Prostate gland (tissue), 2 donors: ENCODE measurements at regions of chr7 and their contacts with region 1.

Region 1: GRCh38 chr7:108146070-108146837 is 16.1 kb upstream of the LAMB4 start:
- DNase-seq: peak; percentile 53
- H3K4me3 ChIP-seq: no peak overlapping the region
- H3K27ac ChIP-seq: no peak overlapping the region
- H3K4me1 ChIP-seq: no peaks in the 10 kb centered on the region
- H3K27me3 ChIP-seq: no peaks in the 10 kb centered on the region
- CTCF ChIP-seq: peak; percentile 50 to 87 (median 76)
- POLR2A ChIP-seq: no peak

Region 2: GRCh38 chr7:107469929-107470328 is 676.3 kb before region 1 on chr7 and contains the start of gene GPR22:
- intact Hi-C with region 1: loop called (anchors 5 kb)
- DNase-seq: no peak
- H3K4me3 ChIP-seq: no peak within 1 kb of the TSS
- H3K27ac ChIP-seq: no peak within 1 kb of the TSS
- H3K4me1 ChIP-seq: no peaks in the 10 kb centered on the region
- H3K27me3 ChIP-seq: no peaks in the 10 kb centered on the region
- CTCF ChIP-seq: no peak
- POLR2A ChIP-seq: no peak
- total RNA-seq, gene GPR22: not detected

Region 3: DNA sequence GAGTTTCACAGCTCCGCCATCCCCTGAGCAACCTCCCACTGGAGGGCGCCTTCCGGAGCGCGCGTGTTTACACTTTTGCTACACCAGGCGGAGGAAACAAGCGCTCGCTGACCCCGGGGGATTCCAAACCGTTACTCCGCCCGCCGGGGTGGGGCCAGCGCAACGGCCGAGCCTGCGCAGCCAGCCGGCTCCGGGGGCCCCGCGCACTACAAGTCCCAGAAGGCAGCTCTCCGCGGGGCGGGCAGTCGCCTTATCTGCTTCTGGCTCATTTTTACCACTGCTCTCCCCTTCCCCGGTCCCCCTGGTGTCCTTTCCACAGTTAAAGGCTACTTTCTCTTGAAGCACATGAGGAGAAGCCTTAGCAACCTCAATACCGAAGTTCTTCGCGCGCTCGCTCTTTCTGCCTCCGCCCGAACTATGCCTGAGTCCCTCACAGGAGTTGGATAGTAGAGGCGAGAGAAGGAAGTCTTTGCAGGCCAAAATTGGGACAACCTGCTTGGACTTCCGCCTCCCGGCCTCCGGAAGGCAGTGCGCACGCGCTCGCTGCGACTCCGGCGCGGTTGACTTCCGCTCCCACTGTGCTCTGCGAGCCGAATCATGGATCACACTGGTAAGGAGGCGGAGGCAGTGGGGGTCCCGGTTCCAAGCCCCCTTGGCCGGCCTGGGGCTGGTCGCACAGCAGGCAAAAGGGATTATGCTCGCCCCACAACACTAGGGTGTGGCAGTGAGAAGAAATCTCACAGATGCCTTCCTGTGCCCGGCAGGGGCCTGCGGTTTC is 402.5 kb before region 1 on chr7 and contains the start of gene CBLL1:
- intact Hi-C with region 1: loop called (anchors 10 kb)
- DNase-seq: peak; percentile 96
- H3K4me3 ChIP-seq: peak within 1 kb of the TSS; percentile 71 to 73
- H3K27ac ChIP-seq: peak within 1 kb of the TSS; percentile 89 to 95
- H3K4me1 ChIP-seq: no peaks in the 10 kb centered on the region
- H3K27me3 ChIP-seq: no peaks in the 10 kb centered on the region
- CTCF ChIP-seq: peak; percentile 38 to 87 (median 76)
- POLR2A ChIP-seq: peak; percentile 24
- total RNA-seq, gene CBLL1: 35.3 to 49.2 TPM

Region 4: DNA sequence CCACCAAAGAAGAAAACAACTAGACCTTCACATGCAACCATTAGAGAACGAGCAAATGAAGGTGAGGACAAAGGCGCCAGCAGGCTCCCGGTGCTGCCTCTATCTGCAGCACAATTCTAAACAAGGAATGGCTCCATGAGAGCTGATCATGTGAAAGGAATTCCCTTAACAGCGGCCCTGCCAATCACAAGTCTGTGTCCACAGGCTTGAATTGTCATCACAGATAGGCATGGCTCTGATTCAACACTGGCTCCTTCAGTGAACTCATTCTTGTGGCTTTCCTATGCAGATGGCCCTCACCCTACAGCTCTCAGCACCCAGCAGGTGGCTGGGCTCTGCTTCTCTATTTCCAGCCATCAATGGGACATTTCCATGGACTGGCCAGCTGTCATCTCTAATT is 179.5 kb before region 1 on chr7:
- intact Hi-C with region 1: no loop called
- DNase-seq: no peak
- H3K4me3 ChIP-seq: no peak overlapping the region
- H3K27ac ChIP-seq: no peak overlapping the region
- H3K4me1 ChIP-seq: no peaks in the 10 kb centered on the region
- H3K27me3 ChIP-seq: no peaks in the 10 kb centered on the region
- CTCF ChIP-seq: no peak
- POLR2A ChIP-seq: no peak

Region 5: DNA sequence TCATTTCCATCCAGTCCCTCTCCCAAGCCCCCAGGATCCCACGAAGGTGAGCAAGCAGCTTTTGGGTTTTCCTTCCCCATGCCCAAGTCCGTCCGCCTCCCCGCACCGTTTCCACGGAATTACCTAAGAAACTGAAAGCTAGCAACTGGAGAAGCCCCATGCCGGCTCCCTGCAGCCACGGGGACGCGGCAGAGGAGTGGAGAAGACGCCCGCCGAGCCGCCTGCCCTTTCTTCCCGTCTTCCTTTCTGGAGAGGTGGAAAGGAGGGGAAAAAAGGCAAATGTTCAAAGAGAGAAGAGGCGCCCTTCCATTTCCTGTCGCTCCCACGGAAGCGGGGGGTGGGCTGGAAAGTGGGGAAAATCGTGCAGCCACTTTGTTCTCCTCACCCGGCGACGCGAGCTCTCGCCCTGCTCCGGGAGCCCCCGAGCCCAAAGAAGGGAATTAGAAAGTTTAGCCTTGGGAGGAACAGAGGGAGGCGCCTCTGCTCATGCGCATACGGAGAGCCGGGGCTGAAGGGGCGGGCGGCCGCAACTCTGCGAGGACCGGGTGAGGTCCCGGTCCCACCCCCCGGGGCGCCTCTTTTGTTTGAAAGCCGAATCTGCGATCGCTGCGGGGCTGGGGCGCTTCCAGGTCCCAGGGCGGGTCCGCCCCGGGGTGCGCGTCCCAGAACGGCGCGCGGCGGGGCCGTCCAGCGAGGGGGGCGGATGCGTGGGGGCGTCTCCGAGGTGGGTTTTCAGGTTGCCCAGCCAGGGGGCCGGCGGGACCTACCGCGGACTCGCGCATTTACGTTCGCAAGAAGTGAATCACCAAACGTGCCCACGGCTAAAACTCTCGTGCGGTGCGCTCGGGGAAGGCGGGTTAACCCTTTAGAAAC is 143.3 kb before region 1 on chr7 and contains the start of gene LAMB1:
- intact Hi-C with region 1: loop called (anchors 10 kb)
- DNase-seq: peak; percentile 33
- H3K4me3 ChIP-seq: peak within 1 kb of the TSS; percentile 46 to 48
- H3K27ac ChIP-seq: peak within 1 kb of the TSS; percentile 52 to 57
- H3K4me1 ChIP-seq: peaks cover 4% of the 10 kb centered on the region
- H3K27me3 ChIP-seq: peaks cover 3% of the 10 kb centered on the region
- CTCF ChIP-seq: no peak
- POLR2A ChIP-seq: peak; percentile 48
- total RNA-seq, gene LAMB1: 15.5 to 64.1 TPM

Region 6: DNA sequence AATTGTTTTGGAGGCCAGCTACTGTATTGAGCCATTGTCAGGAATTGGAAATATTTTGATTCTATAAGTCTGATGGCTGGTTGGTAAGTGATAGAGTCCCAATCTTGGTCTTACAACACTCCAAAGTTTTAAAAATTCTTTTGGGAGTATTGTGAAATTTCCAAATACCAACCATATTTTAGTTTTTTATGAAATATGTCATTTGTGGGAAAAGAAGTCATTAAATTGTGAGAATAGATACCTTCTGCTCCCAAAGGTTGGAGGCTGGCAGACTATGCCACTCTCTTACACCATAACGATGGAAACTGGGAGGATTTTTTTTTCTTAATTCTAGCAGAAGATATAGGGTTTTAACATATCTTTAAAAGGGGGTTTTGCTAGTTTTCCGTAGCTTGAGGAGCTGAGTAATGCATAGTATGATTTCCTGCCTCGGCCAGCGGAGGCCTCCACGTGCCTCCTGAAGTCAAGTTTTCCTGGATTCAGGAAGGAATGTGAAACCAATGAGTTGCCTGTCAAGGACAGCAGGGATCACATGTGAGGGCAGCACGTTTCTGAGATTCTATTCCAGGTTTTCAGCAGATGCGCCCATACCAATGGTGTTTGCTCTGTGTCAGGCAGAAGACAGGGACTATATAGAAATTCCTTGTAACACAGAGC is 76.1 kb after region 1 on chr7:
- intact Hi-C with region 1: no loop called
- DNase-seq: no peak
- H3K4me3 ChIP-seq: no peak overlapping the region
- H3K27ac ChIP-seq: no peak overlapping the region
- H3K4me1 ChIP-seq: no peaks in the 10 kb centered on the region
- H3K27me3 ChIP-seq: no peaks in the 10 kb centered on the region
- CTCF ChIP-seq: no peak
- POLR2A ChIP-seq: no peak